ENCODE measurements at regions of chr3 and their contacts with region 1.

Region 1: DNA sequence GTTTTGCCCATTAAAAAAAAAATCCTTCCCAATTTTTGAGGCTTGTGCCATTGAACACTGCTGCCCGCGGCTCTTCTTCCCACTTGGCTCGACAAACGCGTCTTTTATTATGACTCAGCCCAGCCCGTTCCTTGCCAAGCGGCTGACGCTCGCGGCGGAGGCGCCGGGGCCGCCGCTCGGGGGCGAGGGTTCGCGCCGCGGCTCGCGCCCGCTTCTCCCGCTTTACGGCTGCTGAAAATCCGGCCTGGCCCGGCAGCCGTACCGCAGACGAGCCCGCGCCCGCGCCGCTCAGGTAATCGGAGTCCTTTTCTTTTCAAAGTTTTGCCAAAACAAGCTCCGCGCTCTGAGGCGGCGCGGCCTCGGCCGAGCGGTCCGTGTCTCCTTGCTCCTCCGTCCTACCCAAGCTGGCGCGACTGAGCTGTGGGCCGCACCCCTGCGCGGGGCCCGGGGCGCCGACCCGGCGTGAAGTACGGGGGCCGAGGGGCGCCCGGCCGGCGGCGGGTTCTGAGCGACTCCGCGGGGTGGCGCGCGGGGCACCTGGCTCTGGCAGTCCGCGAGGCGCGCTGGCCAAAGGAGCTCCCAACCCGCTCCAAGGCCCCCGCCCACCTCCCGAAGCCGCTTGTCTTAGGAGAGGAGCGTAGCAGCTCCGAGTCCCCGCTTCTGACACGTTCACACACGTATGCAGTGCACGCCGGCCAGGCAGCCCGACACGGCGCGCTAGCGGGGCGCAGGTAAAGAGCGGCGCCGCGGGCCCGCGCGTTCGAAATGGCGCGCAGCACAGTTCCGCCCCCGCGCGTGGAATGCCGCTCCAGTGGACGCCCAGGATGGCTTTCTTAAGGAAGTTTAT is 418.2 kb upstream of the NAALADL2 start:
- DNase-seq: peak; percentile 95
- ATAC-seq: peak; percentile 66
- H3K4me3 ChIP-seq: peak overlapping the region; percentile 77
- H3K27ac ChIP-seq: peak overlapping the region; percentile 95
- H3K4me1 ChIP-seq: peaks cover 34% of the 10 kb centered on the region
- H3K27me3 ChIP-seq: no peaks in the 10 kb centered on the region
- CTCF ChIP-seq: no peak; the same call in 1 of the 2 replicates

Region 2: DNA sequence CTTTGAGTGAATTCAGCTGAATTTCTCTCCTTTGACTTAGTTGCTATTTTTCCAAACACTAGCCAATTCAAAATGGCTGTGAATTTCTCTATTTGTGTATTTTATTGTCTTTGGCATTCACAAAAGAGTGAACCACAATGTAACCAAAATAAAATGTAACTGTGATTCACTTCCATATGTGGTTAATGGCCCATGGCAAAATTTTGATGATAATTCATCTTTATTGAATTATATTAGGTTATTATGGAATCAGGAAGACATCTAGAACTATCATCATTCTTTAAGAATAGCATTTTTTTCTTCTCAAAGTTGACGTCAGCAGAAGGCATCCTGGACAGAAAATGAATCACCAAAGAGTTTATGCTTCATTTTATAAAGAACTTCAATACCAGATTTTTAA is 287.1 kb before region 1 on chr3:
- CTCF ChIA-PET with region 1: no interaction called
- POLR2A ChIA-PET with region 1: no interaction called
- intact Hi-C with region 1: loop called (anchors 5 kb)
- DNase-seq: peak; percentile 74
- ATAC-seq: peak; percentile 85
- H3K4me3 ChIP-seq: no peak overlapping the region
- H3K27ac ChIP-seq: no peak overlapping the region
- H3K4me1 ChIP-seq: peaks cover 7% of the 10 kb centered on the region
- H3K27me3 ChIP-seq: no peaks in the 10 kb centered on the region
- CTCF ChIP-seq: no peak

Region 3: DNA sequence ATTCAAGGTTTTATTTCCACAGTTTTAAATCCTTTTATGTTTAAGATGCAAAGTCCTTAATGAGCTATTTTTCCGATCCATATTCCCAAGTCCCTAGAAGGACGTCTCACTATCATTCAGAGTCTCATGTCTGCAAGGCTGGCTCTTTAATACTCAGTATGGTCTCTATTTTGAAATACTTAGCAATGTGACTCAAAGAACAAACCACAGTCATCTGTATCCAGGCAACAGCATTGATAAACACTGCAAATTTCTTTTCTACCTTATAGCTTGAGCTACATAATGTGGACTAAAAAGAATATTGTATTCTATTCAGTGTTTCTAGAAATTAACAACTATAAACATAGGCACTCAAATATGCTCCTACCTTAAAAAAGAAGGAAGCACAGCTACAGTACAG is 170.1 kb before region 1 on chr3:
- CTCF ChIA-PET with region 1: no interaction called
- POLR2A ChIA-PET with region 1: no interaction called
- intact Hi-C with region 1: no loop called
- DNase-seq: peak; percentile 24
- ATAC-seq: peak; percentile 35; the same call in 1 of the 2 replicates
- H3K4me3 ChIP-seq: no peak overlapping the region
- H3K27ac ChIP-seq: no peak overlapping the region
- H3K4me1 ChIP-seq: no peaks in the 10 kb centered on the region
- H3K27me3 ChIP-seq: no peaks in the 10 kb centered on the region
- CTCF ChIP-seq: no peak

Region 4: DNA sequence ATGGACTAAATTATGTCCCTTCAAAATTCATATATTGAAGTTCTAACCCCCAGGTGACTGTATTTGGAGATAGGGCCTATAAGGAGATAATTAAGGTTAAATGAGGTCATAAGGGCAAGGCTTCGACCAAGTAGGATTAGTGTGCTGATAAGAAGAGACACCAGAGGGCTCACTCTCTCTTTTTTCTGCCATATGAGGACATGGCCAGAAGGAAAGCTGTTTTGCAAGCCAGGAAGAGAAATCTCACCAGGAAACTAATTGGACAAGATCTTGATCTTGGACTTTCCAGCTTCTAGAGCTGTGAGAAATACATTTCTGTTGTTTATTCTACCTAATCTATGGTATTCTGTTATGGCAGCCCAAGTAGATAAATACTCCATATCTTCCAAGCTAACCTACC is 85.5 kb before region 1 on chr3:
- CTCF ChIA-PET with region 1: no interaction called
- POLR2A ChIA-PET with region 1: interaction called, 5 read pairs
- intact Hi-C with region 1: loop called (anchors 1 kb)
- DNase-seq: peak; percentile 48
- ATAC-seq: peak; percentile 81
- H3K4me3 ChIP-seq: no peak overlapping the region
- H3K27ac ChIP-seq: no peak overlapping the region
- H3K4me1 ChIP-seq: no peaks in the 10 kb centered on the region
- H3K27me3 ChIP-seq: no peaks in the 10 kb centered on the region
- CTCF ChIP-seq: peak; percentile 65

Region 5: GRCh38 chr3:174457758-174458157 is 16.8 kb after region 1 on chr3:
- CTCF ChIA-PET with region 1: no interaction called
- POLR2A ChIA-PET with region 1: no interaction called
- intact Hi-C with region 1: no loop called
- DNase-seq: no peak
- ATAC-seq: no peak
- H3K4me3 ChIP-seq: no peak overlapping the region
- H3K27ac ChIP-seq: no peak overlapping the region
- H3K4me1 ChIP-seq: no peaks in the 10 kb centered on the region
- H3K27me3 ChIP-seq: no peaks in the 10 kb centered on the region
- CTCF ChIP-seq: no peak

Region 6: GRCh38 chr3:174495311-174495710 is 54.3 kb after region 1 on chr3:
- CTCF ChIA-PET with region 1: no interaction called
- POLR2A ChIA-PET with region 1: no interaction called
- intact Hi-C with region 1: no loop called
- DNase-seq: no peak
- ATAC-seq: no peak
- H3K4me3 ChIP-seq: no peak overlapping the region
- H3K27ac ChIP-seq: no peak overlapping the region
- H3K4me1 ChIP-seq: no peaks in the 10 kb centered on the region
- H3K27me3 ChIP-seq: no peaks in the 10 kb centered on the region
- CTCF ChIP-seq: no peak

Region 7: GRCh38 chr3:174533286-174533685 is 92.3 kb after region 1 on chr3:
- CTCF ChIA-PET with region 1: no interaction called
- POLR2A ChIA-PET with region 1: no interaction called
- intact Hi-C with region 1: loop called (anchors 5 kb)
- DNase-seq: peak; percentile 12
- ATAC-seq: no peak
- H3K4me3 ChIP-seq: no peak overlapping the region
- H3K27ac ChIP-seq: no peak overlapping the region
- H3K4me1 ChIP-seq: peaks cover 20% of the 10 kb centered on the region
- H3K27me3 ChIP-seq: no peaks in the 10 kb centered on the region
- CTCF ChIP-seq: no peak

Region 8: GRCh38 chr3:174775587-174775986 is 334.6 kb after region 1 on chr3:
- CTCF ChIA-PET with region 1: no interaction called
- POLR2A ChIA-PET with region 1: no interaction called
- intact Hi-C with region 1: loop called (anchors 5 kb)
- DNase-seq: no peak
- ATAC-seq: peak; percentile 6
- H3K4me3 ChIP-seq: no peak overlapping the region; the same call in 1 of the 2 replicates
- H3K27ac ChIP-seq: peak overlapping the region; percentile 71
- H3K4me1 ChIP-seq: peaks cover 23% of the 10 kb centered on the region
- H3K27me3 ChIP-seq: no peaks in the 10 kb centered on the region
- CTCF ChIP-seq: no peak

Region 9: DNA sequence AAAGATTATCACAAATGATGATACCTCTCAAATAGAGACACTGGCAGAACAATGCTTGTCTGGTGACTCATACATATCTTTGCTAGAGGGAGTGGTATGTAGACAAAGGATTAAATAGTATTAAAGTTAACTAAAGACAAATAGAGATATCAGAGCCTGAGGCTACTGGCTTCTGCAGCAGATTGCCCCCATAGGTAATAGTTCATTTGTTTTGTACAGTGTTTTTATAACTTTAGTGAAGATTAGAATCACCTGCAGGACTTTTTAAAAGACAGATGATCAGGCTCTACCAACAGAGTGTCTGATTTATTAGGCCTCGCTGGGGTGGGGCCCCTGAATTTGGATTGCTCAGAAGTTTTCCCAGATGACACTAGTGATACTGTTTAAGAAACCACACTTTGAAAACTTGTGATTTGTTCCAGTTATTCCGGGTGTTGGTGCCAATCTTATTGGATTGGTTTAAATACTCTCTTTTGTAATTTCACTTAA is 514.6 kb after region 1 on chr3:
- CTCF ChIA-PET with region 1: no interaction called
- POLR2A ChIA-PET with region 1: no interaction called
- intact Hi-C with region 1: loop called (anchors 5 kb)
- DNase-seq: peak; percentile 90
- ATAC-seq: peak; percentile 84
- H3K4me3 ChIP-seq: 0 out of 2 replicates have a peak overlapping the region, but pooled peaks have one; percentile 2
- H3K27ac ChIP-seq: peak overlapping the region; percentile 81
- H3K4me1 ChIP-seq: peaks cover 61% of the 10 kb centered on the region
- H3K27me3 ChIP-seq: no peaks in the 10 kb centered on the region
- CTCF ChIP-seq: no peak

Measured in PC-3 (cell line).